ENCODE measurements at regions of chr14 and their contacts with region 1.

Region 1: GRCh38 chr14:69242311-69243224 is 17.4 kb upstream of the GALNT16 start:
- DNase-seq: no peak

Region 2: GRCh38 chr14:69363055-69363454 is 120.5 kb after region 1 on chr14:
- intact Hi-C with region 1: loop called (anchors 5 to 10 kb)
- DNase-seq: peak; percentile 85

Region 3: DNA sequence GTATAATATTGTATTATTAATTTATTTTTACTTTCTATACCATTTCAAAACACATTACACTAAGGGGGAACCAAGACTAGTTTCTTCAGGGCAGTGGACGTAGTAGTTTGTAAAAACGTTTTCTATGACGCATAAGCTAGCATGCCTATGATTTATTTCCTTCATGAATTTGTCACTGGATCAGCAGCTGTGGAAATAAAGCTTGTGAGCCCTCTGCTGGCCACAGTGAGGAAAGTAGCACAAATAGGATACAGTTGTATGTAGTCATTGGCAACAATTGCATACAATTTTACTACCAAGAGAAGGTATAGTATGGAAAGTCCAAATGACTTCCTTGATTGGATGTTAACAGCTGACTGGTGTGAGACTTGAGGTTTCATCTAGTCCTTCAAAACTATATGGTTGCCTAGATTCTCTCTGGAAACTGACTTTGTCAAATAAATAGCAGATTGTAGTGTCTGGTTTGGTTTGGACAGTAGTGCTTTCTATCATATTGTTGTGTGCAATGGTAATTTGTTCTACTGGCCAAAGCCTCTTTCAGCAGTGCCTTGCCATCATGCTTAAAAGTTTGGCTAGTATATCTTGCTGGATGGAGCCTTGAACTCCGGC is 217.6 kb after region 1 on chr14:
- intact Hi-C with region 1: loop called (anchors 5 to 10 kb)
- DNase-seq: no peak

Region 4: DNA sequence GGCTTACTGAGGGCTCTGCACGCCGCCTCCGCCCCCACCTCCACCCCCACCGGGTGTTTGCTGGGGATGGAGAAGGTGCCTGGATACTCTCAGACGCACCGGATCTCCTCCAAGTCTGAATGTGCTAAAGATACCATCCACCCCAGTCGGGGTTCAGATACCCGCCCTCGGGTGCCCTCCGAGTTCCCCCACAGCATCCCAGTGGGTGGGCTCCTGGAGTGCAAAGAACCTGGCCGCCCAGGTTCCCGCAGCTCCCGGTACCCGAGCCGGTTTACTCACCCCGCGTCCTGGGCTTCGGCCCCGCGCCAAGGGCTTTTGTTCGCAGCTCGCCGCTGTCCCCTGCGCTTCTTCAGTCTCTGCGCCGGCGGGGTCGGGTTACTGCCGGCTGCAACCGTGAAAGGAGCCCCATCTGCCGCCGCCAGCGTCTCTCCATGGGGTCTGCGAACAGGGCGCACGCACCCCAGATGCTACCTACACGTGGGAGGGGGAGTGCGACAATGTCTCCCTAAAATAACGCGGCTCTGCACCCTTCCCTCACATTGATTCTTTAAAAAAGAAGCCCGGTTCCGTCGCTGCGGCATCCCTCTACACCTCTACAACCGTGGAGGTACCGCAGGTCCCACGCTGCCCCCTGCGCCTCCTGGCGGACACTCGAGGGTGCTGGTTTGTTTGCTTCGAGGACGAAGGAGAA is 331.8 kb after region 1 on chr14 and contains the start of gene CCDC177:
- intact Hi-C with region 1: loop called in 1 of 2 experiments (anchors 10 kb)
- DNase-seq: peak; percentile 85
- total RNA-seq, gene CCDC177: not detected